Colonic mucosa (tissue), 4 donors: ENCODE measurements at regions of chr11 and their contacts with region 1.

Region 1: DNA sequence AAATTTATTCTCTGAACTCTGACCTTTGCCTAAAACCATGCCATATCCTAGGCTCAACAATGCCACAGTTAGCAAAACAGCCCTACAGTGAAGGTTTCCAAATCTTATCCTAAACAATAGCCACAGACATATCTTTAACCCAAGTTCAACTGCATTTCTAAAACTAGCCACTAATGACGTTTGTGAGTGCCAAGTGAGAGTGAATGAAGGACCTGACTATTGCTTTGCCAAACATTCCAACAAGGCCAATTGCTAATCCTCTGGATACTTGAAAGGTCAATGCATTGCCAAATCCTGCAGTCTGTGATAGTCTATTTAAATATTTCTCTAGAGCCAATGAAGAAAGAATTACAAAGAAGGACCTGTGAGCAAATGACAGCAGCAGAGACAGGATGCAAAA is 2.5 kb upstream of the OR4C45 start:
- DNase-seq: no peak
- H3K4me3 ChIP-seq: no peak overlapping the region
- H3K27ac ChIP-seq: no peak overlapping the region
- H3K4me1 ChIP-seq: no peaks in the 10 kb centered on the region
- H3K27me3 ChIP-seq: no peaks in the 10 kb centered on the region
- CTCF ChIP-seq: no peak

Region 2: DNA sequence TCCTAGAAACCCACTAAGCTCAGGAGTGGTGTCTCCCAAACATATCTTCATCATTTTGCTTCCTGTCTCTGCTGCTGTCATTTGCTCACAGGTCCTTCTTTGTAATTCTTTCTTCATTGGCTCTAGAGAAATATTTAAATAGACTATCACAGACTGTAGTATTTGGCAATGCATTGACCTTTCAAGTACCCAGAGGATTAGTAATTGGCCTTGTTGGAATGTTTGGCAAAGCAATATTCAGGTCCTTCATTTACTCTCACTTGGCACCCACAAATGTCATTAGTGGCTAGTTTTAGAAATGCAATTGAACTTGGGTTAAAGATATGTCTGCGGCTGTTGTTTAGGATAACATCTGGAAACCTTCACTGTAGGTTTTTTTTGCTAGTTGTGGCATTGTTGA is 1675.5 kb before region 1 on chr11:
- intact Hi-C with region 1: loop called (anchors 5 kb)
- DNase-seq: no peak
- H3K4me3 ChIP-seq: no peak overlapping the region
- H3K27ac ChIP-seq: no peak overlapping the region
- H3K4me1 ChIP-seq: no peaks in the 10 kb centered on the region
- H3K27me3 ChIP-seq: no peaks in the 10 kb centered on the region
- CTCF ChIP-seq: no peak